GM13976 (cell line): ENCODE measurements at regions of chr10 and their contacts with region 1.

Region 1: GRCh38 chr10:123043409-123043925 is 34.7 kb downstream of the ACADSB start:
- DNase-seq: peak; percentile 70
- CTCF ChIP-seq: peak; percentile 66

Region 2: GRCh38 chr10:123129618-123130271 is 86.3 kb after region 1 on chr10:
- in situ Hi-C with region 1: loop called (anchors 10 kb)
- DNase-seq: no peak
- CTCF ChIP-seq: no peak

Region 3: GRCh38 chr10:123236122-123236521 is 192.7 kb after region 1 on chr10:
- in situ Hi-C with region 1: no loop called
- DNase-seq: no peak
- CTCF ChIP-seq: no peak

Region 4: DNA sequence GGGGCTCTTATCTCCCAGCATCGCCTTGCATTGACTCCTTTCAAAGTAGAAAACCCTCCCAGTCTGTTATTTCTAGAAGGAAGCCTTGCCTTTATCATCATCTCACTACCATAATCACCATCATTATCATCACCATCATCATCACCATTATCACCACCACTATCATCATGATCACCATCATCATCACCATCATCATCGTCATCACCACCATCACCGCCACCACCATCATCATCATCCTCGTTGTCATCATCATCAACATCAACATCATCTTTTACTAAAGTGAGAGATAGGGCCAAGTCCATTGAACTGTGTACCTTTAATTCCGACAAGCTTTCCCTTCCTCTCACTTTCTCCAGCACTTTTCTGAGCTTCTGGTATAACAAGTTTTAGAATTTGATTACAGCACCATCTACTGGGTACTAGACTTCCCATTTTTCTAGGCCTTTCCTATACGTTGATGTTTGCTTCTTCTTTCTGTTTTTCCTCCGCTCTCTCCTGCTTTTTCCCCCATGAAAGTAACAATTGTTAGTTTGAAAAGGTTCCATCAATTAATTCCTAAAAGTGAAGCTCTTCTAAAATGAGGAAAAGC is 337.1 kb after region 1 on chr10:
- in situ Hi-C with region 1: loop called (anchors 10 kb)
- DNase-seq: no peak
- CTCF ChIP-seq: no peak

Region 5: DNA sequence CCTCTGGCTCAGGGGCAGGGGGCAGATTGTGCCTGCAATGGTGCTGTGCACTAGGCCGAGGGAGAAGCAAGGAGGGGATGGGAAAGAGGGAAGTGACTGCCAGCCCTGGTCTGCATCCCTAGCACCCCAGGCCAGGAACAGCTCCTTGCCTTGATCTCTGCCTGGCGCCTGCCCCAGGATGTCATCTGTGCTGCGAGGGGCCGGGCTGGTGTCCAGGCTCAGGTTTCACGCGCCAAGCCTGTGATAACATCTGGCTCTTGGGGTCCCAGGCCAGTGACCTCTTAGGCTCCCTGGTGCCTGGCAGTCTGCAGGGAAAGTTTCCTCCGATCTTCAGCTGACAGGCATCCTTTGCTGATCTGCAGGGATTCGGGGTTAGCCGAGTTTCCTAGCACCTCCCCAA is 429.1 kb after region 1 on chr10:
- in situ Hi-C with region 1: no loop called
- DNase-seq: no peak
- CTCF ChIP-seq: no peak

Region 6: DNA sequence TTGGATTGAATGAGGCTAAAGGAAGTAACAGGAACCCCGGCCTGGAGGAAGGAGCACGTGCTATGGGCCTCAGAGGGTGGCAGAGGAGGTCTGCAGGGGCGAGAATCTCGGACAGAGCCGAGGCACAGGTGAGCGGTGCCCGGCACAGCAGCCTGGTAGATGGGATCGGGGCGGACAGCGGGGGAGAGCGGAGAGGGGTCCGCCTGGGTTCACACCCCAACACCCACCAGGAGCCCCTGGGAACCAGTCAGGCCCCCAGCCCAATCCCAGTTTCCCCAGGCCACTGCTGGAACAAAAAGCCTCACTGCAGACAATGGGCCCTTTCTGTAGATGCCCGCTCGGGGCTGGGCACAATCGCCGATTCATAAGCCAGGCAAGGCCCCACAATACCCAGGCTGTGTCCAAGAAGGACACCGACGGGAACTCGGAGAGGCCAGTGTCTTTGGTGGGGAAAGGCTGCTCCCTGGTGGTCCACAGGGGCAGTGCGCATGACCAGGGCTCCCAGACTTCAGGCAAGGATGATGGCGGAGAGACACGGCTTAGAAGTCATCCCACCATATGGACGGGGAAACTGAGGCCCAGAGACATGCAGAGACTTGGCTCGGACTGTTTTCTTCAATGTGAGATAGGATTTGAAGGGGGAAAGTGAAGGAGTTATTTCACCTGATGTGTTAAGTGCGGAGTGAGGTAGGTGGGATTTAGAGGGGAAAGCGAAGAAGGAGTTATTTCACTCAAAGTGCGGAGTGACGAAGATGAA is 515.8 kb after region 1 on chr10:
- in situ Hi-C with region 1: loop called (anchors 10 kb)
- DNase-seq: peak; percentile 90
- CTCF ChIP-seq: peak; percentile 96